Endothelial cell of umbilical vein (primary cell): ENCODE measurements at regions of chr16 and their contacts with region 1.

Region 1: DNA sequence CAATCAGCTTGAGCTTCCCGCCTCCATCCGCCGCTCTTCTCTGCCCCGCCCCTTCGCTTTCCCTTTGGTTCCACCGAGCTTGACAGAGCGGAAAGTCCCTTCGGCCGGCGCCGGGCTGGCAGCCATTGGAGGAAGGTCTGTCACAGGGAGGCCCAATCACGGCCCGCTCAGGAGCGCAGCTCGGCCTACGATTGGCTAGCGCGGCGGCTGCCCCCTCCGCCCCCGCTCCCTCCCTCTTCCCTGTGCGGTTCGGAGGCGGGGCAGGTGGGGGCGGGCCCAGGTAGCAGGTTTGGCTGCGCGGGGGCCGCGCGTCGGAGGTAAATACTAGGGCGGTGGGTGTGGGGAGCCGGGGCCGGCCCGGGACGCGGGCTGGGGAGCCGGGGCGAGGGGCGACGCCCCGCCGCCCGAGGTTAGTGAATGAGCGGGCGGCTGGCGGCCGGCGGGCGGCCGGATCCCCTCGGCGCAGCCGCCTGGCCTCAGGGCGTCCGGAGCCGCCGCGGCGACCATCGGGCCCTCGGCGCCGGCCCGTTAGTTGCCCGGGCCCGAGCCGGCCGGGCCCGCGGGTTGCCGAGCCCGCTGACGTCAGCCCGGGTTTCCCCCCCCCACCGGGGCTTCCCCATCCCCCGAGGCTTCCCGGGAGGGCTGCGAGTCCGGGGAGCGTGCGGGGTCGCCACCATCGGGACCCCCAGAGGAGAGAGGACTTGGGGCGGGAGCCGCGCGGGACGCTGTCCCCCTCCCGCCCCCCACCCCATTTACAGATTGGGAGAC is at the start of gene CYLD:
- DNase-seq: peak; percentile 100
- H3K4me3 ChIP-seq: peak within 1 kb of the TSS; percentile 63 to 92 (median 79)
- H3K27ac ChIP-seq: peak within 1 kb of the TSS; percentile 62
- H3K4me1 ChIP-seq: peaks cover 11% of the 10 kb centered on the region
- H3K27me3 ChIP-seq: peaks cover 2 to 3% of the 10 kb centered on the region in 2 experiments
- CTCF ChIP-seq: no peak
- POLR2A ChIP-seq: no peak
- total RNA-seq, gene CYLD: 21.5 and 22.2 TPM in 2 replicates

Region 2: GRCh38 chr16:50548125-50548908 is 193.7 kb before region 1 on chr16 and contains the start of gene NKD1:
- CTCF ChIA-PET with region 1: no interaction called
- POLR2A ChIA-PET with region 1: no interaction called
- dilution Hi-C with region 1: no loop called
- intact Hi-C with region 1: loop called (anchors 5 kb)
- DNase-seq: peak; percentile 26
- H3K4me3 ChIP-seq: peak within 1 kb of the TSS; percentile 47 to 52 (median 48)
- H3K27ac ChIP-seq: no peak within 1 kb of the TSS
- H3K4me1 ChIP-seq: peaks cover 4% of the 10 kb centered on the region
- H3K27me3 ChIP-seq: peaks cover 37% of the 10 kb centered on the region in 2 experiments
- CTCF ChIP-seq: no peak
- POLR2A ChIP-seq: no peak
- total RNA-seq, gene NKD1: 0.32 TPM in 1 of 2 replicates, not detected in the other

Region 3: GRCh38 chr16:50974438-50975036 is 232.5 kb after region 1 on chr16:
- CTCF ChIA-PET with region 1: no interaction called
- POLR2A ChIA-PET with region 1: no interaction called
- dilution Hi-C with region 1: no loop called
- intact Hi-C with region 1: no loop called
- DNase-seq: no peak
- H3K4me3 ChIP-seq: no peak overlapping the region
- H3K27ac ChIP-seq: no peak overlapping the region
- H3K4me1 ChIP-seq: no peaks in the 10 kb centered on the region
- H3K27me3 ChIP-seq: no peaks in the 10 kb centered on the region
- CTCF ChIP-seq: no peak
- POLR2A ChIP-seq: no peak